ENCODE measurements at regions of chr1 and their contacts with region 1.

Region 1: DNA sequence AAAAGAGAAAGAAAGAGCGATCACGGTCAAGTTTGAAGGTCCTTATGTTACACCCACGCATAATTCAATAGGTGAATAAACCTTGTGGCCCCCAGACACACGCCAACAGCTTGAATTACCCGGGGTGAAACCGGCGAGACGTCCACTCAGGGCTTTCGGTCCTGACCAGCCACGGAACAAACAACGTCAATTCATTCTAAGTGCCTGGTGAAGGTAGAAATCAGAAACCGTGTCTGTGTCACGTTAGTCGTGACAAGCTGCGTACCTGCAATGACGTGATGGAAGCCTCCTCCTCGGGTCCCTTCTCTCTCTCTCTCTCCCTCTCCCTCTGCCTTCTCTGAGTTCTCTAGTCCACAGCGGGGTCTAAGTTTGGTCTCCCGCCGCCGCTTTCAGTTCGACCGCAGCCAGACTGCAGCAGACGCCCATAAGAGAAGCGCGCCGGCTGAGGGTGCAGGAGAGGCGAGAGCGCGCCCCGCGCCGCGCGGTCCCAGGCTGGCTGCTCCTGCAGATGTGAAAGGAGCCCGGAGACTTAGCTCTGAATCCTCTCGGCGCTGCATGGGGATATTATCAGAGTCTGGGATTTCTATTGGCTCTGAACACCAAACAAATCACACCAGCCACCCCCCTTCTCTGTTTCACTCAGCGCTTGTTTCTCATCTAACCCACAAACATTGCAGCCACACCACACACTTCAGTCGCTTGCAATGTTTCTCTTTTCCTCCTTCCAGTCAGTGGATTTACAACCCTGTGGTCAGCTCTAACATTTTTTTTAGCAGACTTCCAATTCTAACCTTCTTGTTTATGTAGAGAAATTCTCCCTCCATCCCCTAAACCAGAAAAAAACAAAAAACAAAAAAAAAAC is at the start of gene GREM2:
- DNase-seq: peak; percentile 72
- H3K4me3 Mint-ChIP-seq: peak within 1 kb of the TSS; percentile 90
- H3K27ac Mint-ChIP-seq: peak within 1 kb of the TSS; percentile 69
- H3K4me1 Mint-ChIP-seq: peaks cover 30% of the 10 kb centered on the region
- H3K27me3 Mint-ChIP-seq: peaks cover 42% of the 10 kb centered on the region
- total RNA-seq, gene GREM2: 0.17 to 0.25 TPM

Region 2: GRCh38 chr1:240027059-240027462 is 584.8 kb before region 1 on chr1:
- CTCF ChIA-PET with region 1: no interaction called
- intact Hi-C with region 1: loop called (anchors 10 kb)
- DNase-seq: peak; percentile 28
- H3K4me3 Mint-ChIP-seq: no peak overlapping the region
- H3K27ac Mint-ChIP-seq: no peak overlapping the region
- H3K4me1 Mint-ChIP-seq: no peaks in the 10 kb centered on the region
- H3K27me3 Mint-ChIP-seq: peaks cover 5% of the 10 kb centered on the region

Region 3: GRCh38 chr1:240455228-240455821 is 156.5 kb before region 1 on chr1:
- CTCF ChIA-PET with region 1: interaction called, 9 read pairs
- intact Hi-C with region 1: loop called (anchors 1 kb)
- DNase-seq: peak; percentile 10
- H3K4me3 Mint-ChIP-seq: no peak overlapping the region
- H3K27ac Mint-ChIP-seq: no peak overlapping the region
- H3K4me1 Mint-ChIP-seq: no peaks in the 10 kb centered on the region
- H3K27me3 Mint-ChIP-seq: no peaks in the 10 kb centered on the region

Region 4: DNA sequence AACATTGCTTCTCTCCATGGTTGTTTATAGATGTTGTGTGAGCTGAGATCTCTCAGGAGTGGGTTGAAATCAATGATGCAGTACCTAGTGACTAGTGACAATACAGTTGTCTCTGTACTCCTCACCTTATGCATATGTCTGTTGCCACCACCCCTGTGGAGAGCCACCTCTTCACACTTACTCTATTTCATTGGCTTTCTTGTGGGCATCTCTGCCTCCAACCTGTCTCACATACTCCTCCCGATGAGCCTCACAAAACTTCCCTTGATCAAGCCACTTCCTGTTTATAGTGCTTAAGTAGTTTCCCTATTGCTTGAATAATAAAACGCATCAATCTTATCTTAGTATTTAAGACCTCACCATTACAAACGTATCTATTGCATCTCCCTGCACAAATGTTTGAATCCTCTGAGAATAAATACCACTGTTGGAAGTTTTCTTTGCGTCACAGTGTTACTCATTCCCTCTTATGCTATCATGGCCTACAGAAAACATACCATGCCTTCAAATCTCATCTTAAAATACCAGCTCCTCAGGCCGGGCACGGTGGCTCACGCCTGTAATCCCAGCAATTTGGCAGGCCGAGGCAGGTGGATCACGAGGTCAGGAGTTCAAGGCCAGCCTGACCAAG is 54.8 kb after region 1 on chr1:
- CTCF ChIA-PET with region 1: interaction called, 3 read pairs
- intact Hi-C with region 1: loop called (anchors 2 kb)
- DNase-seq: peak; percentile 22
- H3K4me3 Mint-ChIP-seq: no peak overlapping the region
- H3K27ac Mint-ChIP-seq: peak overlapping the region; percentile 59
- H3K4me1 Mint-ChIP-seq: peaks cover 13% of the 10 kb centered on the region
- H3K27me3 Mint-ChIP-seq: no peaks in the 10 kb centered on the region

Measured in activated naive CD4-positive, alpha-beta T cell treated with anti-CD3 and anti-CD28 coated beads for 36 hours (primary cell).